Naive thymus-derived CD4-positive, alpha-beta T cell (primary cell): ENCODE measurements at regions of chr9 and their contacts with region 1.

Region 1: GRCh38 chr9:87684627-87685219 is 41.2 kb upstream of the CTSL start:
- DNase-seq: no peak
- ATAC-seq: no peak
- H3K4me3 ChIP-seq: no peak overlapping the region
- H3K4me3 Mint-ChIP-seq: peak overlapping the region in 5 of 10 donors; percentile 38 to 80 (median 73)
- H3K27ac ChIP-seq: no peak overlapping the region
- H3K27ac Mint-ChIP-seq: peak overlapping the region in 4 of 9 donors; percentile 68 to 91 (median 77)
- H3K4me1 ChIP-seq: peaks cover 0 to 13% of the 10 kb centered on the region in 2 donors
- H3K4me1 Mint-ChIP-seq: peaks cover 13 to 37% (median 24%) of the 10 kb centered on the region in 7 donors
- H3K27me3 ChIP-seq: no peaks in the 10 kb centered on the region
- H3K27me3 Mint-ChIP-seq: peaks cover 0 to 13% (median 0%) of the 10 kb centered on the region in 5 donors

Region 2: DNA sequence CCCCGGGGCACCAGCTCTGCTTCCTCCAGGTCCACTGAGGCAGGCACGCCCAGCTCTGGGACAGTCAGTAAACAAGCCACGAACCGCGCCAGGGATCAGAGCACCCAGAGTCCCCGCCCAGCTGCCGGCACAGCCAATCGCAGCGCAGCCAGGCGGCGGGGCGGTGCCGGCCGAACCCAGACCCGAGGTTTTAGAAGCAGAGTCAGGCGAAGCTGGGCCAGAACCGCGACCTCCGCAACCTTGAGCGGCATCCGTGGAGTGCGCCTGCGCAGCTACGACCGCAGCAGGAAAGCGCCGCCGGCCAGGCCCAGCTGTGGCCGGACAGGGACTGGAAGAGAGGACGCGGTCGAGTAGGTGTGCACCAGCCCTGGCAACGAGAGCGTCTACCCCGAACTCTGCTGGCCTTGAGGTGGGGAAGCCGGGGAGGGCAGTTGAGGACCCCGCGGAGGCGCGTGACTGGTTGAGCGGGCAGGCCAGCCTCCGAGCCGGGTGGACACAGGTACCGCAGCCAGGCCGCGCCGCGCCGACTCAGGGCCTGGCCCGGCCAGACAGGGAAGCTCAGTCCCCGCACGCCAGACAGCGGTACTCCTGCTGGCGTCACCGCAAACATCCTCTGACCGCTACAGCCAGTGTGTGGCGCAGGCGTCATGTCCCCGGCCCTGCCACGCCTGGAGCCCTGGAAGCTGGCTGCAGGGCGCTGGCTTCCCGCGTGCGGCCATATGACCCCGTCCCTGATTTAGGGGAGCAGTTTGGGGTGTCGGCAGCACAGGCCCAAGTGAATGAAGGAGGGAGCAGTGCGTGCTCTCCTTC is 41.4 kb after region 1 on chr9 and contains the start of gene CTSL:
- CTCF ChIA-PET with region 1: no interaction called
- POLR2A ChIA-PET with region 1: interaction called, 4 read pairs
- intact Hi-C with region 1: loop called in 1 of 2 experiments (anchors 2 kb)
- DNase-seq: peak; percentile 30 to 65 (median 46)
- ATAC-seq: peak; percentile 82
- H3K4me3 ChIP-seq: peak within 1 kb of the TSS; percentile 77
- H3K4me3 Mint-ChIP-seq: peak within 1 kb of the TSS; percentile 85 to 97 (median 93)
- H3K27ac ChIP-seq: peak within 1 kb of the TSS; percentile 56
- H3K27ac Mint-ChIP-seq: peak within 1 kb of the TSS; percentile 63 to 98 (median 91)
- H3K4me1 ChIP-seq: no peaks in the 10 kb centered on the region
- H3K4me1 Mint-ChIP-seq: peaks cover 10 to 55% (median 31%) of the 10 kb centered on the region in 7 donors
- H3K27me3 ChIP-seq: no peaks in the 10 kb centered on the region
- H3K27me3 Mint-ChIP-seq: peaks cover 0 to 43% (median 0%) of the 10 kb centered on the region in 5 donors
- total RNA-seq, gene CTSL: 3.7 to 67.9 (median 14.9) TPM

Region 3: GRCh38 chr9:88173378-88173999 is 488.8 kb after region 1 on chr9:
- CTCF ChIA-PET with region 1: no interaction called
- POLR2A ChIA-PET with region 1: no interaction called
- intact Hi-C with region 1: loop called in 1 of 2 experiments (anchors 10 kb)
- DNase-seq: peak in 8 of 9 donors; percentile 28 to 64 (median 52)
- ATAC-seq: peak; percentile 72
- H3K4me3 ChIP-seq: no peak overlapping the region
- H3K4me3 Mint-ChIP-seq: no peak overlapping the region
- H3K27ac ChIP-seq: no peak overlapping the region
- H3K27ac Mint-ChIP-seq: no peak overlapping the region
- H3K4me1 ChIP-seq: no peaks in the 10 kb centered on the region
- H3K4me1 Mint-ChIP-seq: peaks cover 0 to 9% (median 2%) of the 10 kb centered on the region in 7 donors
- H3K27me3 ChIP-seq: no peaks in the 10 kb centered on the region
- H3K27me3 Mint-ChIP-seq: peaks cover 0 to 42% (median 7%) of the 10 kb centered on the region in 5 donors

Region 4: DNA sequence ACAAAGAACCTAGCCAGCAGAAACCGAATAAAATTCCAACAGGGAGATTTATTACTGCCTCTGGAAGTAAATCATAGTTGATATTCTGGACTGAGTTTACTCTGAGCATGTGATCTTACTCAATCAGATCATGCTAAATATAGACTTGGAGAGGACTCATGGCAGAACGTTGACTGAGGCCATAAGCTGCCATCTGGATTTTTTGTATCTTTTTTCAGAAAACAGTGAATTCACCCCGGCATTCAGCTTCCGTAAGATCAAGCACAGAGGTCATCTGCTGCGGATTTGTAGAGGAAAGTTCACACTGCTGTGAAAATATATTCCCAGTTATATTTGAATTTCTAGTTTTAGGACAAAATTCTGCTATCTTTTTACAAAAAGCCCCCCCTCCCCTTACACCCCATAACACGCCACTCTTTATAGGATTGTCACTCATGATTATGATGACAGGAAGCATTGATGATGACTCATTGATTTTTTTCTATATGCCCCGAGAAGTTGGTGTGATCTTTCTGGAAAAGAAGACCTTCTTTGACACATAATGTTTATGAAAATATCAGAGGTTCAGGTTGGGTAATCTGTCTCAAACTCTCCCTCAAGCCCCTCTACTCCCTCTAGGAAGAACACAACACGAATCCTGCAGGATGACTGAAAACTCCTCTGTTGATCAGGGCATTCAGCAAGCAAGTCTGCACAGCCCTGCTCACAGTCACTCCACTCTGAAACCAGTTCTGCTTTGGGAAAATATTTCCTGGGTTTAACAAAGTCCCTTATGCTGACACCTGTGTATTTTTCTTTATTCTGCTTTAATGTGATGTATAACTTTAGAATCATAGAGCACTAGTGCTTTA is 921.0 kb after region 1 on chr9:
- CTCF ChIA-PET with region 1: no interaction called
- POLR2A ChIA-PET with region 1: no interaction called
- intact Hi-C with region 1: no loop called
- DNase-seq: no peak
- ATAC-seq: no peak
- H3K4me3 ChIP-seq: no peak overlapping the region
- H3K4me3 Mint-ChIP-seq: no peak overlapping the region
- H3K27ac ChIP-seq: no peak overlapping the region
- H3K27ac Mint-ChIP-seq: no peak overlapping the region
- H3K4me1 ChIP-seq: no peaks in the 10 kb centered on the region
- H3K4me1 Mint-ChIP-seq: no peaks in the 10 kb centered on the region
- H3K27me3 ChIP-seq: no peaks in the 10 kb centered on the region
- H3K27me3 Mint-ChIP-seq: peaks cover 5 to 16% (median 13%) of the 10 kb centered on the region in 5 donors